Aorta (tissue), 5 donors: ENCODE measurements at regions of chr12 and their contacts with region 1.

Region 1: GRCh38 chr12:50924439-50925341 is 27.7 kb upstream of the HIGD1C start:
- DNase-seq: peak; percentile 92 to 94
- ATAC-seq: peak; percentile 96
- H3K4me3 ChIP-seq: peak overlapping the region; percentile 84 to 95
- H3K27ac ChIP-seq: peak overlapping the region; percentile 82
- H3K4me1 ChIP-seq: peaks cover 0 to 4% of the 10 kb centered on the region in 2 donors
- H3K27me3 ChIP-seq: no peaks in the 10 kb centered on the region

Region 2: DNA sequence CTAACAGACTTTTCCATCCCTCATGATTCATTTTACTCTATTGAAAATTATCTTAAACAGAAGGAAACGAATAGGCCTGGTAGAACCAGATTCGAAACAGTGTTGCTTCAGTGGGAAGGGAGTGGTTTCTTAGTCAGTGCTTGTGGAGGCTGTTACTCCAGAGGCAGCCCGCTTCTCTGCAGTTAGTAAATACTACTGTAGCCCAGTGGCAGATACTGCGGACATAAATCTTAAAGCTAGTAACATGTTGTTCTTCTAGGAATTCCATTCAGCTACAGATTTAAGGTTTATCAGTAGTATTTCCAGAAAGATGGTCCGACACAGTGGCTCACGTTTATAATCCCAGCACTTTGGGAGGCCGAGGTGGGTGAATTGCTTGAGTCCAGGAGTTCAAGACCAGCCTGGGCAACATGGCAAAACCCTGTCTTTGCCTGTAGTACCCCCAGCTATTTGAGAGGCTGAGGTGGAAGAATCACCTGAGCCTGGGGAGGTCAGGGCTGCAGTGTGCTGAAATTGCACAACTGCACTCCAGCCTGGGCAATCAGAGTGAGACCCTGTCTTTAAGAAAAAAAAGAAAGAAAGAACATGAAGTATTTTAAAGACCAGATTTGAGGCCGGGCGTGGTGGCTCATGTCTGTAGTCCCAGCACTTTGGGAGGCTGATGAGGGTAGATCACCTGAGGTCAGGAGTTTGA is 374.0 kb before region 1 on chr12:
- intact Hi-C with region 1: no loop called
- DNase-seq: no peak
- ATAC-seq: peak; percentile 67
- H3K4me3 ChIP-seq: no peak overlapping the region
- H3K27ac ChIP-seq: no peak overlapping the region
- H3K4me1 ChIP-seq: no peaks in the 10 kb centered on the region
- H3K27me3 ChIP-seq: no peaks in the 10 kb centered on the region

Region 3: GRCh38 chr12:50676761-50677160 is 247.9 kb before region 1 on chr12:
- intact Hi-C with region 1: no loop called
- DNase-seq: no peak
- ATAC-seq: no peak
- H3K4me3 ChIP-seq: no peak overlapping the region
- H3K27ac ChIP-seq: no peak overlapping the region
- H3K4me1 ChIP-seq: no peaks in the 10 kb centered on the region
- H3K27me3 ChIP-seq: no peaks in the 10 kb centered on the region

Region 4: GRCh38 chr12:50825372-50825838 is 99.3 kb before region 1 on chr12:
- intact Hi-C with region 1: loop called in 1 of 2 experiments (anchors 10 kb)
- DNase-seq: no peak
- ATAC-seq: peak; percentile 89
- H3K4me3 ChIP-seq: no peak overlapping the region
- H3K27ac ChIP-seq: no peak overlapping the region
- H3K4me1 ChIP-seq: no peaks in the 10 kb centered on the region
- H3K27me3 ChIP-seq: no peaks in the 10 kb centered on the region

Region 5: DNA sequence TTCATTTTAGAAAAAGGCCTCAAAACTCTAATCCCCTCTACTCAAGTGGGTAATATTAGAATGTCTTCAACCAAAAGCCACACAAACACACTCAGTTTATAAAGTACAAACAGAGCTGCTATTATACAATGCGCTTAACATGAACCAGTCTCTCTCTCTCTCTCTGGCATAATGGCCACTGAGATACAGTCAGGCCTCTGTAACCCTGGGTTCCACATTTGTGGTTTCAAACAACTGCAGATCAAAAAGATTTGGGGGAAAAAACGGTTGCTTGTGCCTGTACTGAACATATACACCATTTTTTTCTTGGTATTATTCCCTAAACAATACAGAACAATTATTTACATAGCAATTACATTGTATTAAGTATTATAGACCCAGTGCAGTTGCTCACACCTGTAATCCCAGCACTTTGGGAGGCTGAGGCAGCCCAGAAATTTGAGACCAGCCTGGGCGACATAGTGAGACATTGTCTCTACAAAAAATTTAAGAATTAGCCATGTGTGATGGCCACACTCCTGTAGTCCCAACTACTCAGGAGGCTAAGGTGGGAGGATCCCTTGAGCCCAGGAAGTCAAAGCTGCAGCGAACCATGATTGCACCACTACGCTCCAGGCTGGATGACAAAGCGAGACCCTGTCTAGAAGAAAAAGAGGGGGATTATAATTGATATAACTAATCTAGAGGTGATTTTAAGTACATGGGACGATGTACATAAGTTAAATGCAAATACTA is 95.9 kb after region 1 on chr12:
- intact Hi-C with region 1: no loop called
- DNase-seq: no peak
- ATAC-seq: no peak
- H3K4me3 ChIP-seq: no peak overlapping the region
- H3K27ac ChIP-seq: no peak overlapping the region
- H3K4me1 ChIP-seq: no peaks in the 10 kb centered on the region
- H3K27me3 ChIP-seq: no peaks in the 10 kb centered on the region